T-cell (primary cell): ENCODE measurements at regions of chr1 and their contacts with region 1.

Region 1: GRCh38 chr1:203326830-203327683 is 21.7 kb downstream of the BTG2 start:
- DNase-seq: peak; percentile 83 to 97 (median 95)
- ATAC-seq: peak; percentile 76 to 84 (median 78)
- H3K4me3 ChIP-seq: peak overlapping the region; percentile 65 to 66
- H3K4me3 Mint-ChIP-seq: peak overlapping the region; percentile 70 to 82 (median 77)
- H3K27ac ChIP-seq: peak overlapping the region; percentile 100
- H3K27ac Mint-ChIP-seq: peak overlapping the region; percentile 97
- H3K4me1 ChIP-seq: peaks cover 53 to 66% of the 10 kb centered on the region in 2 experiments
- H3K4me1 Mint-ChIP-seq: peaks cover 59 to 67% (median 62%) of the 10 kb centered on the region in 3 donors
- H3K27me3 ChIP-seq: no peaks in the 10 kb centered on the region
- H3K27me3 Mint-ChIP-seq: no peaks in the 10 kb centered on the region

Region 2: GRCh38 chr1:203206129-203206687 is 120.8 kb before region 1 on chr1:
- CTCF ChIA-PET with region 1: no interaction called
- POLR2A ChIA-PET with region 1: no interaction called
- DNase-seq: no peak
- ATAC-seq: no peak
- H3K4me3 ChIP-seq: no peak overlapping the region
- H3K4me3 Mint-ChIP-seq: no peak overlapping the region
- H3K27ac ChIP-seq: no peak overlapping the region
- H3K27ac Mint-ChIP-seq: no peak overlapping the region
- H3K4me1 ChIP-seq: no peaks in the 10 kb centered on the region
- H3K4me1 Mint-ChIP-seq: no peaks in the 10 kb centered on the region
- H3K27me3 ChIP-seq: peaks cover 0 to 23% of the 10 kb centered on the region in 2 experiments
- H3K27me3 Mint-ChIP-seq: peaks cover 4 to 15% of the 10 kb centered on the region in 2 donors

Region 3: GRCh38 chr1:203290261-203291089 is 36.6 kb before region 1 on chr1:
- CTCF ChIA-PET with region 1: interaction called in 1 of 2 experiments, 18 read pairs
- POLR2A ChIA-PET with region 1: interaction called, 14 to 18 read pairs
- DNase-seq: peak; percentile 91 to 99 (median 98)
- ATAC-seq: peak; percentile 67 to 73 (median 71)
- H3K4me3 ChIP-seq: peak overlapping the region; percentile 30 to 49
- H3K4me3 Mint-ChIP-seq: peak overlapping the region; percentile 77 to 80 (median 78)
- H3K27ac ChIP-seq: peak overlapping the region; percentile 99
- H3K27ac Mint-ChIP-seq: peak overlapping the region; percentile 95 to 99
- H3K4me1 ChIP-seq: peaks cover 43 to 64% of the 10 kb centered on the region in 2 experiments
- H3K4me1 Mint-ChIP-seq: peaks cover 80 to 88% (median 83%) of the 10 kb centered on the region in 3 donors
- H3K27me3 ChIP-seq: no peaks in the 10 kb centered on the region
- H3K27me3 Mint-ChIP-seq: no peaks in the 10 kb centered on the region

Region 4: GRCh38 chr1:203340112-203340804 is 13.2 kb after region 1 on chr1:
- CTCF ChIA-PET with region 1: interaction called, 4 to 13 read pairs
- POLR2A ChIA-PET with region 1: interaction called, 5 to 6 read pairs
- DNase-seq: peak in 34 of 35 experiments; percentile 18 to 81 (median 41)
- ATAC-seq: peak; percentile 65 to 78 (median 72)
- H3K4me3 ChIP-seq: no peak overlapping the region
- H3K4me3 Mint-ChIP-seq: no peak overlapping the region
- H3K27ac ChIP-seq: no peak overlapping the region
- H3K27ac Mint-ChIP-seq: peak overlapping the region in 1 of 2 donors; percentile 38
- H3K4me1 ChIP-seq: peaks cover 5 to 27% of the 10 kb centered on the region in 2 experiments
- H3K4me1 Mint-ChIP-seq: peaks cover 39 to 42% (median 40%) of the 10 kb centered on the region in 3 donors
- H3K27me3 ChIP-seq: peaks cover 5 to 21% of the 10 kb centered on the region in 2 experiments
- H3K27me3 Mint-ChIP-seq: peaks cover 4 to 28% of the 10 kb centered on the region in 2 donors

Region 5: GRCh38 chr1:203351037-203352013 is 24.3 kb after region 1 on chr1 and contains the start of gene FMOD:
- CTCF ChIA-PET with region 1: no interaction called
- POLR2A ChIA-PET with region 1: no interaction called
- DNase-seq: no peak
- ATAC-seq: peak in 2 of 4 experiments; percentile 33 to 62
- H3K4me3 ChIP-seq: no peak within 1 kb of the TSS
- H3K4me3 Mint-ChIP-seq: peak within 1 kb of the TSS in 1 of 3 donors; percentile 47
- H3K27ac ChIP-seq: no peak within 1 kb of the TSS
- H3K27ac Mint-ChIP-seq: no peak within 1 kb of the TSS
- H3K4me1 ChIP-seq: peaks cover 0 to 8% of the 10 kb centered on the region in 2 experiments
- H3K4me1 Mint-ChIP-seq: peaks cover 0 to 10% (median 0%) of the 10 kb centered on the region in 3 donors
- H3K27me3 ChIP-seq: peaks cover 0 to 32% of the 10 kb centered on the region in 2 experiments
- H3K27me3 Mint-ChIP-seq: peaks cover 26 to 55% of the 10 kb centered on the region in 2 donors
- total RNA-seq, gene FMOD: 0.13 to 0.41 (median 0.18) TPM in 3 of 5 donors, not detected in the others

Region 6: DNA sequence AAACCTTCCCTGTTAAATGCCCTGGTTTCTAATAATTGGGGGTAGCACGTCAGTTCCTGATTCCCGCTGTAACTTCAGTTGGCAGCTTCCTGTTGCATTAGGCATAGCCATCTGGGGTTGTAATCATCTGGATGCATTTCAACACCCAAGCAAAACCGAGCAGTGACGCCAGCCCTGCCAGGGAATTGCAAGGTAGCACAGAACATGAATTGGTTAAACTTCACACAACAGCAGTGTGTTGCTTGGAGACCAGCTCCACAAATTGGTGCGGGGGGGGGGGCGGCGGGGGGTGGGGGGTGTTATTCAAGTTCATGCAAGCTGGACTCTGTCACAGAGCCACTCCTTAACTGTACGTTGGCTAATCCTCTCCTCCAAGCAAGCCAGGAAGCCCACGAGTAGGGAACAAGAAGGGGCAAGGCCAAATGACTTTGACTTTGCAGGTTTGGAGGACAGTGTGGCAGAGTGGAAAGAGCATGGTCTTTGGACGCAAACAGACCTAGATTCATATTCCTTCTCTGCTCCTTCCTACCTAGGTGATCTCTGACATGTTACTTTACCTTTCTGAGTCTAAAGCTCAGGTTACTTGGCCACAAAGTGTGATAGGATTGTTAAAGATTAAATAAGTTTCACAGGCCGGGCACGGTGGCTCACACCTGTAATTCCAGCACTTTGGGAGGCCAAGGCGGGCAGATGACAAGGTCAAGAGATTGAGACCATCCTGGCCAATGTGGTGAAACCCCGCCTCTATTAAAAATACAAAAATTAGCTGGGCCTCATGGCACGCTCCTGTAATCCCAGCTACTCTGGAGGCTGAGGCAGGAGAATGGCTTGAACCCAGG is 442.7 kb after region 1 on chr1:
- CTCF ChIA-PET with region 1: no interaction called
- POLR2A ChIA-PET with region 1: no interaction called
- DNase-seq: peak in 10 of 35 experiments; percentile 8 to 44 (median 16)
- ATAC-seq: no peak
- H3K4me3 ChIP-seq: no peak overlapping the region
- H3K4me3 Mint-ChIP-seq: peak overlapping the region in 1 of 3 donors; percentile 62
- H3K27ac ChIP-seq: no peak overlapping the region
- H3K27ac Mint-ChIP-seq: peak overlapping the region; percentile 71 to 92
- H3K4me1 ChIP-seq: peaks cover 5 to 34% of the 10 kb centered on the region in 2 experiments
- H3K4me1 Mint-ChIP-seq: peaks cover 37 to 53% (median 46%) of the 10 kb centered on the region in 3 donors
- H3K27me3 ChIP-seq: no peaks in the 10 kb centered on the region
- H3K27me3 Mint-ChIP-seq: no peaks in the 10 kb centered on the region

Region 7: DNA sequence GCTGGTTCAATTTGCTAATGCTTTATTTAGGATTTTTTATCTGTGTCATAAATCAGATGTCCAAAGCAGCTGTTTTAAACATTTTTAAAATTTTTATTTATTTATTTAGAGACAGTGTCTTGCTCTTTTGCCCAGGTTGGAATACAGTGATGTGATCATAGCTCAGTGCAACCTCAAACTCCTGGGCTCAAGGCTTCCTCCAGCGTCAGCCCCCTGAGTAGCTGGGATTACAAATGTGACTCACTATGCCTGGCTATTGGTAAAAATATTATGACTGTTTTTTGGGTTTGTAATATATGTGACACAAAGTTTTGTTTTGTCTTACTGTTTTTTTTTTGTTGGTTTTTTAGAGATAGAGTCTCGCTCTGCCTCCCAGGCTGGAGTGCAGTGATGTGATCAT is 480.1 kb after region 1 on chr1:
- CTCF ChIA-PET with region 1: no interaction called
- POLR2A ChIA-PET with region 1: interaction called in 1 of 2 experiments, 13 read pairs
- DNase-seq: no peak
- ATAC-seq: no peak
- H3K4me3 ChIP-seq: no peak overlapping the region
- H3K4me3 Mint-ChIP-seq: no peak overlapping the region
- H3K27ac ChIP-seq: no peak overlapping the region
- H3K27ac Mint-ChIP-seq: peak overlapping the region in 1 of 2 donors; percentile 31
- H3K4me1 ChIP-seq: peaks cover under 1 to 6% of the 10 kb centered on the region in 2 experiments
- H3K4me1 Mint-ChIP-seq: peaks cover 46 to 57% (median 46%) of the 10 kb centered on the region in 3 donors
- H3K27me3 ChIP-seq: no peaks in the 10 kb centered on the region
- H3K27me3 Mint-ChIP-seq: no peaks in the 10 kb centered on the region